Gastrocnemius medialis (tissue), 4 donors: ENCODE measurements at regions of chr12 and their contacts with region 1.

Region 1: GRCh38 chr12:10392394-10392930 is 2.6 kb upstream of the KLRK1 start:
- DNase-seq: peak; percentile 59 to 76
- ATAC-seq: peak; percentile 86 to 95
- H3K4me3 ChIP-seq: no peak overlapping the region
- H3K27ac ChIP-seq: no peak overlapping the region
- H3K4me1 ChIP-seq: peaks cover 0 to 6% of the 10 kb centered on the region in 2 donors
- H3K27me3 ChIP-seq: no peaks in the 10 kb centered on the region
- CTCF ChIP-seq: no peak
- POLR2A ChIP-seq: no peak

Region 2: DNA sequence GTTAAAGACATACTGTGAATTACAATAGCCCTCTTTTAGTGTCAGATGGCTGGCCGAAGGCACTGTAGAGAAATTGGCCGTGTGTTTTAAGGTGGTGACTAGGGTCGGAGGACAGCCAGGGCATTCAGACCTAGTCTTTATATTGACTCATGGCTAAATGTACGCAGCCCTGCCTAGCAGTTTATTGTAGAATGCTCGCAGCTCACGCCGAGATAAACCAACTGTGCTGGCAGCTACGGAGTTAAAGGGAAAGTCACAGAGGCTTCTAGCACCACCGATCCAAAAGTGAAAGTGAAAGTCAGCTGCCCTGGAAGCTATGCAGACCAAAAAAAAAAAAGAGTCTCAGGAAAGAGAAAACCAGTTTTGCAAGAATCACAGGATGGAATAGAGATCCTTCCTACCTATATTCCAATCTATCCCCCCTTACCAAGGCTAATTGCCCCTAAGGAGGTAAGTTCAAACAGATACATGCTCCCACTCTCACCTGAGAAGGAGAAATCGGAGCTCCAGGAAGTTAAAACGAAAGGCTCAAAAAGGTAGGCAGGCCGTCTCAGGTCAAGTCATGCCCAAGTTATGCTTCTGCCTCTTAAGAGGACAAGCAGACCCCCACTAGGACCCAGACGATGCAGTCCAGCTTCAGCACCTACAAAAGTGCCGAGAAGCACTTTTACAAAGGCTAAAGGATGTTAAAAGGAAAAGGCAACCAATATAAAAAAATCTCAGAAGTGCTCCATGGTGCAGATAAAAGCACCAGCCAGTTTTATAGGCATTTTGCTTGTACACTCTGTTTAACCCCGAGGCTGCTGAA is 27.4 kb before region 1 on chr12:
- in situ Hi-C with region 1: no loop called
- intact Hi-C with region 1: loop called (anchors 2 kb)
- DNase-seq: peak; percentile 30 to 56
- ATAC-seq: peak; percentile 81 to 86
- H3K4me3 ChIP-seq: peak overlapping the region; percentile 79 to 90 (median 84)
- H3K27ac ChIP-seq: peak overlapping the region; percentile 88 to 94 (median 90)
- H3K4me1 ChIP-seq: peaks cover 6 to 36% of the 10 kb centered on the region in 2 donors
- H3K27me3 ChIP-seq: no peaks in the 10 kb centered on the region
- CTCF ChIP-seq: no peak
- POLR2A ChIP-seq: peak in 1 of 2 donors; percentile 12